ENCODE measurements at regions of chr11 and their contacts with region 1.

Region 1: DNA sequence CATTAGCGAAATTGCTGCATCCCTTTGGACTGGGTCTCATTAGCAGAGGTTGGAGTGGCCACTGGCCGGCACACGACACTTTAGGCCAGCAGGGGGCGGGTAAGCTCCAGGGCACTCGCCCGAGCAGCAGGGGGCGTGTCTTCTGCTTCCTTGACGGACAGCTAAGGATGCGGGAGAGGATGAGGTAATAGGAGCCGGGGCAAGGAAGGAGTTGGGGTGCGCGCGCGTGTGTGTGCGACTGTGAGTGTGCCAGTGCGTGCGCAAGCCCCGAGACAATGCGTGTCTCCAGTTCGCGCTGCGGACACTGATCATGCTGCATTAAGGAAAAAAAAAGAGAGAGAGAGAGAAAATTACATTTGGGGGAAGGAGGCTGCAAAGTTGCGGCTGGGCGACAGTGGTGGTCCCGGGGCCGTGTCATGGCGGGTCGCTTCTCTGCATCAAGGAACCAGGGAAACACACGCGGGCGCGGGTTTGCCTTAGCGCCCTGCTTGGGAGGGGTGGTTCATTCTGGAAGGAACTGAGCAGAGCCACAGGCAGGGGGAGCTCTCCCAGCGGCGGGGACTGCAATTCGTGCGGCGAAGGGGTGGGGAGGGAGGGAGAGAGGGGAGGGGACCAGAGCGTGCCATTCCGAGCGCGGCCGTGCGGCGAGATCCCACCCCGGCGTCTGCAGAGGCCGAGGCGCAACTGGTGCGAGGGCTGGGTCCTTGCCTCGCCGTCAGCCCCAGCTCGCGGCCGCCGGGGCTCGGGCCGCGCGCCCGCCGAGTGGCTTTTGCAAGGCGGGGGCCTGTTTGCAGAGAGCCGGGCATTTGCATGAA is at the start of gene DTX4:
- DNase-seq: peak; percentile 95
- H3K4me3 ChIP-seq: peak within 1 kb of the TSS; percentile 52
- H3K4me3 Mint-ChIP-seq: peak within 1 kb of the TSS; percentile 74
- H3K27ac Mint-ChIP-seq: peak within 1 kb of the TSS; percentile 73
- H3K4me1 ChIP-seq: peaks cover 21% of the 10 kb centered on the region
- H3K4me1 Mint-ChIP-seq: peaks cover 12% of the 10 kb centered on the region
- H3K27me3 ChIP-seq: no peaks in the 10 kb centered on the region
- H3K27me3 Mint-ChIP-seq: no peaks in the 10 kb centered on the region
- CTCF ChIP-seq: peak; percentile 88 to 97
- total RNA-seq, gene DTX4: 85.6 and 96.7 TPM in 2 replicates

Region 2: GRCh38 chr11:57698843-57699365 is 1472.8 kb before region 1 on chr11:
- CTCF ChIA-PET with region 1: no interaction called
- POLR2A ChIA-PET with region 1: no interaction called
- intact Hi-C with region 1: no loop called
- DNase-seq: no peak
- H3K4me3 ChIP-seq: no peak overlapping the region
- H3K4me3 Mint-ChIP-seq: no peak overlapping the region
- H3K27ac Mint-ChIP-seq: no peak overlapping the region
- H3K4me1 ChIP-seq: no peaks in the 10 kb centered on the region
- H3K4me1 Mint-ChIP-seq: no peaks in the 10 kb centered on the region
- H3K27me3 ChIP-seq: no peaks in the 10 kb centered on the region
- H3K27me3 Mint-ChIP-seq: no peaks in the 10 kb centered on the region
- CTCF ChIP-seq: no peak

Region 3: GRCh38 chr11:58900479-58901420 is 271.0 kb before region 1 on chr11:
- CTCF ChIA-PET with region 1: no interaction called
- POLR2A ChIA-PET with region 1: no interaction called
- intact Hi-C with region 1: no loop called
- DNase-seq: peak; percentile 90
- H3K4me3 ChIP-seq: no peak overlapping the region
- H3K4me3 Mint-ChIP-seq: peak overlapping the region; percentile 41
- H3K27ac Mint-ChIP-seq: no peak overlapping the region
- H3K4me1 ChIP-seq: no peaks in the 10 kb centered on the region
- H3K4me1 Mint-ChIP-seq: no peaks in the 10 kb centered on the region
- H3K27me3 ChIP-seq: no peaks in the 10 kb centered on the region
- H3K27me3 Mint-ChIP-seq: no peaks in the 10 kb centered on the region
- CTCF ChIP-seq: peak; percentile 63 to 75

Region 4: GRCh38 chr11:59106363-59107336 is 65.1 kb before region 1 on chr11 and contains the start of gene FAM111B:
- CTCF ChIA-PET with region 1: interaction called, 10 read pairs
- POLR2A ChIA-PET with region 1: interaction called, 5 read pairs
- intact Hi-C with region 1: no loop called
- DNase-seq: peak; percentile 94 to 97
- H3K4me3 ChIP-seq: peak within 1 kb of the TSS; percentile 46
- H3K4me3 Mint-ChIP-seq: peak within 1 kb of the TSS; percentile 99
- H3K27ac Mint-ChIP-seq: peak within 1 kb of the TSS; percentile 97
- H3K4me1 ChIP-seq: peaks cover 21% of the 10 kb centered on the region
- H3K4me1 Mint-ChIP-seq: peaks cover 52% of the 10 kb centered on the region
- H3K27me3 ChIP-seq: no peaks in the 10 kb centered on the region
- H3K27me3 Mint-ChIP-seq: no peaks in the 10 kb centered on the region
- CTCF ChIP-seq: peak in 1 of 2 experiments; percentile 35
- total RNA-seq, gene FAM111B: 49.3 and 55.8 TPM in 2 replicates

Region 5: DNA sequence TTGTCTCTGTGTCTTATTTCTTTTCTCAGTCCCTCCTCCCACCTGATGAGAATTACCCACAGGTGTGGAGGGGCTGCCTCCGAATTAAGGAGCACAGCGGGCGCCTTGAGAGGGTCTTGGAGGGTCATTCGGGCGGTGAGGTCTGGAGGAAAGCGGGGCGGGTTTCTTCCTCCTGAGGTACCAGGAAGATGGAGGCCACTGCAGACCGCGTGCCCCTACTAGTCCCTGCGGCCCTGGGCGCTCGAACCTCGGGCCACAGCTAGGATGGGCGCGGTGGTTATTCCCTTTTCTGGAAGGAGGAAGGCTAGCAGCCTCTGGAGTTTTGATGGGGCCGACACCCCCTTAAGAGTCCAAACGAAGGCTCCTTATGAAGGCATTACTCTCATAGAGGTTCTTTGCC is 34.5 kb before region 1 on chr11:
- CTCF ChIA-PET with region 1: no interaction called
- POLR2A ChIA-PET with region 1: no interaction called
- intact Hi-C with region 1: no loop called
- DNase-seq: no peak
- H3K4me3 ChIP-seq: no peak overlapping the region
- H3K4me3 Mint-ChIP-seq: no peak overlapping the region
- H3K27ac Mint-ChIP-seq: no peak overlapping the region
- H3K4me1 ChIP-seq: no peaks in the 10 kb centered on the region
- H3K4me1 Mint-ChIP-seq: peaks cover 15% of the 10 kb centered on the region
- H3K27me3 ChIP-seq: no peaks in the 10 kb centered on the region
- H3K27me3 Mint-ChIP-seq: no peaks in the 10 kb centered on the region
- CTCF ChIP-seq: no peak

Region 6: DNA sequence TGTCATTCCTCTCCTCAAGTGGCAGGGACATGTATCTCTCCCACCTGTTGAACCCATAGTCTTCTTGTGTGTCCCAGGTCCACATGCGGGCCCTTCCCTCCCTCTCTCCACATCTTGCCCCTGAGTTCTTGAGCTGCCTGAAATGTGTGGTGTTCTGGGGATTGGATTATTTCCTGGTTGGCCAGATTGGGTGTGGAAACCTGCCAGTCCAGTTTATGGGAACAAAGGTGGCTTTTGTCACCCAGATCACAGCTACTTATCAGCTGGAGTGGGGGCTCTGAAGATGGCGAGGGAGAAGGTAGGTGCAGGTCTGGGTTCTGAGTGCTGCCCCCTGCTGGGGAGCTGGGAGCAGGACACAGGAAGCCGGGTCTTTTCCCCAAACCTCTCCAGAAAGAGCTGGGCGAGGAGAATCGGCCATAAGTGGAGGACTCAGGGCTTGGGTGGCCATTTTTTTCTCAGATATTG is 14.4 kb after region 1 on chr11:
- CTCF ChIA-PET with region 1: interaction called, 304 read pairs
- POLR2A ChIA-PET with region 1: interaction called, 69 read pairs
- intact Hi-C with region 1: loop called (anchors 1 kb)
- DNase-seq: peak; percentile 95 to 96
- H3K4me3 ChIP-seq: peak overlapping the region; percentile 13
- H3K4me3 Mint-ChIP-seq: peak overlapping the region; percentile 76
- H3K27ac Mint-ChIP-seq: peak overlapping the region; percentile 93
- H3K4me1 ChIP-seq: peaks cover 81% of the 10 kb centered on the region
- H3K4me1 Mint-ChIP-seq: peaks cover 52% of the 10 kb centered on the region
- H3K27me3 ChIP-seq: no peaks in the 10 kb centered on the region
- H3K27me3 Mint-ChIP-seq: no peaks in the 10 kb centered on the region
- CTCF ChIP-seq: peak; percentile 94 to 95

Region 7: GRCh38 chr11:59207988-59208451 is 36.3 kb after region 1 on chr11:
- CTCF ChIA-PET with region 1: interaction called, 20 read pairs
- POLR2A ChIA-PET with region 1: interaction called, 8 read pairs
- intact Hi-C with region 1: loop called (anchors 1 kb)
- DNase-seq: peak in 1 of 2 experiments; percentile 40
- H3K4me3 ChIP-seq: no peak overlapping the region
- H3K4me3 Mint-ChIP-seq: no peak overlapping the region
- H3K27ac Mint-ChIP-seq: no peak overlapping the region
- H3K4me1 ChIP-seq: no peaks in the 10 kb centered on the region
- H3K4me1 Mint-ChIP-seq: peaks cover 6% of the 10 kb centered on the region
- H3K27me3 ChIP-seq: no peaks in the 10 kb centered on the region
- H3K27me3 Mint-ChIP-seq: no peaks in the 10 kb centered on the region
- CTCF ChIP-seq: peak; percentile 59 to 80

Region 8: DNA sequence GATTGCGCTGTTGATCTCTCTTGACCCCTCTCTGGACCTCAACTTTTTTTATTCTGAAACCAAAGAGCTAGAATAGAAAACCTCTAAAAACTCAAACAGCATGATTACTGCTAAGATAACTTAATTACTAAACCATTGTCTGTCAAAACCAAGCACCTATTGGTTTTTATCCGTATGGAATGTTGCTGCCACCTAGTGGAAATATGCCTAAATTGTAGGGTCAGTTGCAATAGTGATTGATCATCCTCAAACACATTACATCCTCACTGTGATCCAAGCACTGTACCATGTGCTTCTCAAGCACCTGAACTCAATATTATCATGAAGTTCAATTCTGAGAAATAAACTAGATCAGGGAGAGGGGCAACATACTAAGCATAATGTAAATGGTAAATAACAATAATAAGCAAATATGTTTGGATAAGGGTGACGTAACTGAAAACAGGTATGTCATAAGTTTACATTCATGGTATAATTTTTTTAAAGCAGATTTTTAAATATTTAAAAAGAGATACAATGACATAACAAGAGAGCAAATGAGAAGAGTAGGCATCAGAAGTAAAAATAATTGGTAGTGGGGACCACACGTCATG is 258.3 kb after region 1 on chr11:
- CTCF ChIA-PET with region 1: no interaction called
- POLR2A ChIA-PET with region 1: no interaction called
- intact Hi-C with region 1: loop called (anchors 1 kb)
- DNase-seq: peak; percentile 46 to 68
- H3K4me3 ChIP-seq: no peak overlapping the region
- H3K4me3 Mint-ChIP-seq: no peak overlapping the region
- H3K27ac Mint-ChIP-seq: no peak overlapping the region
- H3K4me1 ChIP-seq: no peaks in the 10 kb centered on the region
- H3K4me1 Mint-ChIP-seq: no peaks in the 10 kb centered on the region
- H3K27me3 ChIP-seq: no peaks in the 10 kb centered on the region
- H3K27me3 Mint-ChIP-seq: peaks cover 3% of the 10 kb centered on the region
- CTCF ChIP-seq: peak; percentile 68 to 74

Region 9: GRCh38 chr11:59753650-59754493 is 582.2 kb after region 1 on chr11:
- CTCF ChIA-PET with region 1: no interaction called
- POLR2A ChIA-PET with region 1: no interaction called
- intact Hi-C with region 1: loop called (anchors 10 kb)
- DNase-seq: peak; percentile 86 to 90
- H3K4me3 ChIP-seq: peak overlapping the region; percentile 96
- H3K4me3 Mint-ChIP-seq: peak overlapping the region; percentile 83
- H3K27ac Mint-ChIP-seq: peak overlapping the region; percentile 53
- H3K4me1 ChIP-seq: peaks cover 29% of the 10 kb centered on the region
- H3K4me1 Mint-ChIP-seq: peaks cover 19% of the 10 kb centered on the region
- H3K27me3 ChIP-seq: no peaks in the 10 kb centered on the region
- H3K27me3 Mint-ChIP-seq: no peaks in the 10 kb centered on the region
- CTCF ChIP-seq: peak; percentile 93 to 94